ENCODE measurements at regions of chr20 and their contacts with region 1.

Region 1: GRCh38 chr20:50395258-50395729 is 114.9 kb upstream of the PTPN1 start:
- DNase-seq: peak; percentile 87
- ATAC-seq: peak; percentile 69 to 85

Region 2: DNA sequence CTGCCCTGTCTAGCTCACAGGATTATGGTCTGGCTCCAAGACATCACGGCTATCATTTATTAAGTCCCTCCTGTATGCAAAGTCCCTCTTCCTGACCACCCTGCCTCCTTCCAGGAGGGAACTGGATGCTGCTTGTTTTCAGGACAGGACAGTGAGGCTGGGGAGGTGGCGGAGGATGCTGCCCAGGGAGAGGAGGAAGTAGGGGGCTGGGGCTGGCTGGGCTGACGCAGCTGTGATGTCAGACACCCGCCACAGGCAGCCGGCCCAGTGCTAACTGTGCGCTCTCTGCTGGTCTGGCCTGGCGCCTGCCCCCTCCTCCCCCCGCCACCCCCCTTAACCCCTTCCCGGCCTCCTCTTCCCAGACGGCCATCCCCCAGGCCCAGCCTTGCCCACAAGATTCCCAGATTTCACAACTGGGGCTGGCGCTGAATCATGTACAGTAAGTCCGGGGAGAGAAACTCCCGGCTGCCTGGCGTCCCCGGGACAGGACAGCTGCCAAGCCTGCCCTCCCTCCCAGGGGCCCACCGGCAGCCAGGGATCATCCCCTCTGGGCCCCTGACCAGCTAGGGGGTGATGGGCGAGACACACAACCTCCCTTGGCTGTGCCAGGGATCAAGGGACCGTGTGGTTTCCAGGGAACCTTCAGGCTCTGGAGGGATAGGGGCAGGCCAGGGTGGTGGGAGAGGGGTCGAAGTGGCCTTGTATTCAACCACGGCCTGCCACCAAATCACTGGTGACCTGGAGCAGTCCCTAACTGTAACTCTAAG is 86.6 kb before region 1 on chr20:
- intact Hi-C with region 1: loop called in 1 of 2 experiments (anchors 2 kb)
- DNase-seq: peak; percentile 93
- ATAC-seq: peak; percentile 69 to 78

Region 3: GRCh38 chr20:50450881-50451752 is 55.8 kb after region 1 on chr20:
- intact Hi-C with region 1: loop called in 1 of 2 experiments (anchors 10 kb)
- DNase-seq: peak; percentile 53
- ATAC-seq: peak; percentile 58 to 66